Activated CD4-positive, alpha-beta memory T cell treated with anti-CD3 and anti-CD28 coated beads for 36 hours (primary cell): ENCODE measurements at regions of chr1 and their contacts with region 1.

Region 1: DNA sequence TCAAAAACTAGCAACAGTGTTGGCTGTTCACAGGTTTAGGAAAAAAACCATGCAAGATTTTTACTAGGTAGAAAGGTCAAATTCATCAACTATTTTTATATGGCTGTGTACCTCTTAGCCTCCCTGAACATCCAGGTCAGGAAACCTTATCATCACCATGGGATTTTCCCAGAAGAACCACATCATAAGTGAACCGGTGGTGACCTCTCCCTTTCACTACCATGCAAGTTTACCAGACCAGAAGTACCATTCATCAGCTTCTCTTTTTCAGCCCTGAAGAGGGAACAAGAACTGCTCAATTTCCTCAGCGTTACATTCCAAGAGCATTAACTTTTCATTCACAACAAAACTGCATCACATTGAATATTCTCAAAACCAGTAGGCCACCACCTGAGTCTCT is 5.9 kb downstream of the SSBP3 start:
- DNase-seq: peak; percentile 68
- H3K4me3 Mint-ChIP-seq: peak overlapping the region; percentile 30
- H3K27ac Mint-ChIP-seq: peak overlapping the region; percentile 67
- H3K4me1 Mint-ChIP-seq: peaks cover 69% of the 10 kb centered on the region
- H3K27me3 Mint-ChIP-seq: no peaks in the 10 kb centered on the region

Region 2: DNA sequence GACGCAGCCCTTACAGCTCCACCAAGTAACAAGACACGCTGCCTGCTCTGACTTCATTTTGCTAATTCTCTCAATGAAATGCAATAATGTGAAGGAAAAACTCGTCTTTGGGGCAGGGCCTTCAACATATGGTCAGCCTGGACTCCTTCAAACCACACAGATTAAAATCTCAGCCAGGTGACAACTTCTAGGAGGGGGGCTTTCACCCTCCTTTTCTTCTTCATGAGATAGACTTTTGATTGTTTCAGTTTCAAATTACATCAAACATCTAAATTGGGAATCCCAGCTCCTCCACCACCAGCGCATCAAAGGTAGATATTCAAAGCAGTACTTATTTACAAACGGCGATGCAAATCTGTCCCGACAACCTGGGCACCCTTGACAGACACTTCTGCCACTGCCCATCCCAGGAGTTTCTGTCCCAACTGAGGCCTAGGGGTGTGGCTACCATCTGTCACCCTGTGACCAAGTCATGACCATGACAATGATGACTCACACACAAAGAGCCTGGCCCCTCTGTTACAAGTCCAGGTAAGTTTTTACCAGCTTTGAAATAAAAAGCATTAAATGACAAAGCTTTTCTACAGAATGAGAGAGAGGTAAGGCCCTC is 23.8 kb before region 1 on chr1:
- CTCF ChIA-PET with region 1: no interaction called
- POLR2A ChIA-PET with region 1: interaction called, 3 read pairs
- intact Hi-C with region 1: loop called (anchors 2 kb)
- DNase-seq: peak; percentile 59
- H3K4me3 Mint-ChIP-seq: no peak overlapping the region
- H3K27ac Mint-ChIP-seq: no peak overlapping the region
- H3K4me1 Mint-ChIP-seq: peaks cover 50% of the 10 kb centered on the region
- H3K27me3 Mint-ChIP-seq: no peaks in the 10 kb centered on the region

Region 3: DNA sequence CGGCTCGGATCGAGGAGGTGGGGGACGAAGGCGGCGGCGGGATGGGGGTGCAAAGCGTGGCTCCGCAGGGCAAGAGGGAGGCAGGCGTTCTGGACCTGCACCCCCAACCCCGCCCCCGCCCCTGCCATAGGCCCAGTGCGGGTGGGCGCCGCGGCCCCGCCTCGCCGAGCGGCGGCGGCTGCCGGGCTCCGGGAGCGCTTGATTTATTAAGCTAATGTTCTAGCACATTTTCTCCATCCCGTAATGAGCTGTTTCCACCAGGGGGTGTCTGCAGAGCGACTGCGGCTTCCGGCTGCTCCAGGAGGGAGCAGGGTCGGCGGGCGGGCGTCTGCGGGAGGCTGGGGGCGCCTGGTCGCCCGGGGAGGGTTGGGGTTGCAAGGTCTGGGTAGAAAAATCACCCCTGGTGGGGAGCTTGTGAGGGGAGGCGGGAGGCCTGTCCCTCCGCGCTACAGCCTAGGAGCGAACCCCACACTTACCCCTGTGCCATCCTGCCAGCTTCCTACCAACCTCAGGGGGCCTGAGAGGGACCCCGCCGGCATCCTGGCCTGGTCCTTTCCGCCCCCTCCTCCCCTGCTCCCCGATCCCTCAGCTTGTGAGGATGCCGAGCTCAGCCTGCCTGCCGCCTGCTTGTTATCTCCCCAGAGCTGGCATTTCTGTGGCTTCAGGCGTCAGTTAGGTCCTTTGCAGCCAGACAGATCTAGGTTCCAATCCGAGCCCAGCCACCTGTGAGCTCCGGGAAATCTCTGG is 99.2 kb after region 1 on chr1:
- CTCF ChIA-PET with region 1: no interaction called
- POLR2A ChIA-PET with region 1: no interaction called
- intact Hi-C with region 1: no loop called
- DNase-seq: peak; percentile 45
- H3K4me3 Mint-ChIP-seq: peak overlapping the region; percentile 54
- H3K27ac Mint-ChIP-seq: no peak overlapping the region
- H3K4me1 Mint-ChIP-seq: peaks cover 8% of the 10 kb centered on the region
- H3K27me3 Mint-ChIP-seq: peaks cover 35% of the 10 kb centered on the region